ENCODE measurements at regions of chr2 and their contacts with region 1.

Region 1: GRCh38 chr2:46377176-46377581 is 80.0 kb downstream of the EPAS1 start:
- DNase-seq: peak; percentile 47
- H3K4me3 ChIP-seq: no peak overlapping the region
- H3K27ac ChIP-seq: peak overlapping the region in 1 of 2 experiments; percentile 98; a peak in 1 of 4 replicates
- H3K4me1 ChIP-seq: peaks cover 0 to 54% of the 10 kb centered on the region in 2 experiments; a peak in 2 of 4 replicates
- H3K27me3 ChIP-seq: no peaks in the 10 kb centered on the region
- CTCF ChIP-seq: peak; percentile 13; the same call in 1 of the 2 replicates
- EP300 ChIP-seq: no peak
- RAD21 ChIP-seq: peak; percentile 43

Region 2: DNA sequence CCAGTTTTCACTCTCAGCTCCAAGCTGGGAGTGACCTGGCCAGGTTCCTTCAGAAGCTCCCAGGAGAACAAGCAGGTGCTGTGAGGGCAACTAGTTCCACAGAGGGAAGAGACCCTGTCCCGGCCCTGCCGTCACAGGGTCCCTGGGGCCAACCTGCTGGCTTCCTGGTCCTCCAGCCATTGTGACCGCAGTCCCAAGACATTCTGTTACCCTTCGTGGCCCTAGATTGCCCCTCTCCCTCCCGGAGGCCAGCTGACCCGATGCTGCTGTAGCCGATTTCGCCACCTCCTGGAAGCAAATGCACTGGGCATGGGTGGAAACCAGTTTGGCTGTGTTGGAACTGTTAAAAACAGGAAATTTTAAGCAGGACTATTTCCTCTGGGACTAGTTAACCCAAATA is 24.6 kb before region 1 on chr2:
- CTCF ChIA-PET with region 1: interaction called, 11 read pairs
- POLR2A ChIA-PET with region 1: no interaction called
- DNase-seq: no peak
- H3K4me3 ChIP-seq: no peak overlapping the region
- H3K27ac ChIP-seq: peak overlapping the region in 1 of 2 experiments; percentile 47; a peak in 1 of 4 replicates
- H3K4me1 ChIP-seq: peaks cover 0 to 61% of the 10 kb centered on the region in 2 experiments; a peak in 2 of 4 replicates
- H3K27me3 ChIP-seq: no peaks in the 10 kb centered on the region
- CTCF ChIP-seq: no peak; the same call in 1 of the 2 replicates
- EP300 ChIP-seq: no peak
- RAD21 ChIP-seq: no peak

Region 3: GRCh38 chr2:46404202-46404764 is 27.1 kb after region 1 on chr2:
- CTCF ChIA-PET with region 1: no interaction called
- POLR2A ChIA-PET with region 1: no interaction called
- DNase-seq: no peak
- H3K4me3 ChIP-seq: no peak overlapping the region
- H3K27ac ChIP-seq: no peak overlapping the region
- H3K4me1 ChIP-seq: no peaks in the 10 kb centered on the region; a peak in 2 of 4 replicates
- H3K27me3 ChIP-seq: no peaks in the 10 kb centered on the region
- CTCF ChIP-seq: no peak
- EP300 ChIP-seq: no peak
- RAD21 ChIP-seq: no peak

Measured in SK-N-SH (cell line).